PC-3 (cell line): ENCODE measurements at regions of chr10 and their contacts with region 1.

Region 1: DNA sequence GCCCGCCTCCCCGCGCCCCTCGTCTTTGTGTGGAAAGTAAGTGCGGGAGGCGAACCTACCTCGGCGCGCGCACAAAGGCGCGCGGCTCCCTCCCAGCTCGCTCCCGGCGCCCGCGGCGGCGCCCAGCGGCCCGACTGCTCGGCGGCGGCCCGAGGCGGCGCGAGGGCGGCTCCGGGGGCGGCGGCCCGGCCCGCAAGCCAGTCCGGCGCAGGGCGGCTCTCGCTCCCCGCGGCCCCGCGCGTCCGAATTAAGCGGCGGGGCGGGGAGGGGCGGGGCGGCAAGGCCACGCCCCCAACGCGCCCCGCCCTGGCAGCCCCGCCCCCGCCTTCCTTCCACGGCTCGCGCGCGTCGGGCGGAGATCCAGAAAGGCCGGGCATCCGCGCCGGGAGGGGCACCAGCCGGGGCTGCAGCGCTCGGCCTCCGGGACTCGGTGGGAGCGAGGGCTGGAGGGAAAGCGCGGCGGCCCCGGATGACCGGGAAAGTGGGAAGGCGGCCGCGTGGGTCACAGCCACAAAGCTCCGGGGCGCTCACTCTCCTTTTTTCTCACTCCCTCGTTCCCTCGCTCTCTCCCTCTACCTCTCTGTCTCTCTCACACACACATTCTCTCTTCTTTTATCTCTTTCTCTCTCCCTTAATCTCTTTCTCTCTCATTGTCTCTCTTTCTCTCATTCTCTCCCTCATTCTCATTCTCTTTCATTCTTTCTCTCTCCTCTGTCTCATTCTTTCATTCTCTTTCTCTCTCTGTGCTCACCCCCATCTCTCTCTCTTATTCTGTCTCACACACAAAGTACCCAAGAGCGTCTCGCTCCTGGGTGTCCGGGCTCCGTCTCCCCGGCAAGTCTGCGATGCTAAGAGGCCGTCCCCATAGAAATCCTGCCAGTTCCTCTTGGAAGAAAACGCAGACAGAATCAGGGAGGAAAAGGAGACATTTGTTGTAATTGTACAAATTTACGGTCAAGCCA is 170.2 kb downstream of the FAM107B start:
- DNase-seq: peak; percentile 69
- ATAC-seq: peak; percentile 59
- H3K4me3 ChIP-seq: peak overlapping the region; percentile 79
- H3K27ac ChIP-seq: peak overlapping the region; percentile 91
- H3K4me1 ChIP-seq: peaks cover 15% of the 10 kb centered on the region
- H3K27me3 ChIP-seq: no peaks in the 10 kb centered on the region
- CTCF ChIP-seq: no peak

Region 2: GRCh38 chr10:14414901-14415300 is 189.6 kb before region 1 on chr10:
- CTCF ChIA-PET with region 1: no interaction called
- POLR2A ChIA-PET with region 1: no interaction called
- intact Hi-C with region 1: no loop called
- DNase-seq: no peak
- ATAC-seq: no peak
- H3K4me3 ChIP-seq: no peak overlapping the region
- H3K27ac ChIP-seq: no peak overlapping the region
- H3K4me1 ChIP-seq: no peaks in the 10 kb centered on the region
- H3K27me3 ChIP-seq: 0 out of 2 replicates have a peak, but pooled peaks cover 4% of the 10 kb centered on the region
- CTCF ChIP-seq: no peak

Region 3: DNA sequence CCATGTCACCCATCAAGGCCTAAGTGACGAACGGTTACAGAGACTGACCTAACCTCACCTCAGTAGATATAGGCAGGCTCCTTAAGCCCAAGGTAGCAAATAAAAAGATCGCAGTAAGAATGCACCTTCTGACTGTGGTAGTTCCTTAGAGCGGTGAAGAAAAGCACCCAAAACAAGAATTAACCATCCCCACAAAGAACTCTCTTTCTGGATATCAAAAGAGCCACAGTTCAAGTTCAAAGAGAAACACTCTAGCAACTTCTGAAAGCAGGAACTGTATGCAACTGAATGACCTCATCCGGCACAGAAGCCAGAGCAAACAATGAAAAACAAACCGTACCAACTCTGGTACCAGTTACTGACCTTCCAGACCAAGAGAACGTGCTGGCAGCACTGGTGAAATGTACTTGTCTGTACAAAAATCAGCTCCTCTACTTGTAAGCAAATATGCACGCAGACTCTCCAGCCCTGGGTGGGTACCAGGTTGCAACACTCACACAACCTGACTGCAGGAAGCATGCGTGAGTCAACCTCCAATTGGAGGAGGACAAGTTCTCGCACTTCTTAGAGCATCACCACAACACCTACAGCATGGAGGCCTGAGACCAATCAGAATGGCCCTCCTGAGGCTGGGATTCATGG is 32.5 kb before region 1 on chr10:
- CTCF ChIA-PET with region 1: no interaction called
- POLR2A ChIA-PET with region 1: no interaction called
- intact Hi-C with region 1: loop called (anchors 2 kb)
- DNase-seq: peak; percentile 72
- ATAC-seq: peak; percentile 81
- H3K4me3 ChIP-seq: no peak overlapping the region
- H3K27ac ChIP-seq: peak overlapping the region; percentile 71
- H3K4me1 ChIP-seq: peaks cover 40% of the 10 kb centered on the region
- H3K27me3 ChIP-seq: no peaks in the 10 kb centered on the region
- CTCF ChIP-seq: no peak

Region 4: DNA sequence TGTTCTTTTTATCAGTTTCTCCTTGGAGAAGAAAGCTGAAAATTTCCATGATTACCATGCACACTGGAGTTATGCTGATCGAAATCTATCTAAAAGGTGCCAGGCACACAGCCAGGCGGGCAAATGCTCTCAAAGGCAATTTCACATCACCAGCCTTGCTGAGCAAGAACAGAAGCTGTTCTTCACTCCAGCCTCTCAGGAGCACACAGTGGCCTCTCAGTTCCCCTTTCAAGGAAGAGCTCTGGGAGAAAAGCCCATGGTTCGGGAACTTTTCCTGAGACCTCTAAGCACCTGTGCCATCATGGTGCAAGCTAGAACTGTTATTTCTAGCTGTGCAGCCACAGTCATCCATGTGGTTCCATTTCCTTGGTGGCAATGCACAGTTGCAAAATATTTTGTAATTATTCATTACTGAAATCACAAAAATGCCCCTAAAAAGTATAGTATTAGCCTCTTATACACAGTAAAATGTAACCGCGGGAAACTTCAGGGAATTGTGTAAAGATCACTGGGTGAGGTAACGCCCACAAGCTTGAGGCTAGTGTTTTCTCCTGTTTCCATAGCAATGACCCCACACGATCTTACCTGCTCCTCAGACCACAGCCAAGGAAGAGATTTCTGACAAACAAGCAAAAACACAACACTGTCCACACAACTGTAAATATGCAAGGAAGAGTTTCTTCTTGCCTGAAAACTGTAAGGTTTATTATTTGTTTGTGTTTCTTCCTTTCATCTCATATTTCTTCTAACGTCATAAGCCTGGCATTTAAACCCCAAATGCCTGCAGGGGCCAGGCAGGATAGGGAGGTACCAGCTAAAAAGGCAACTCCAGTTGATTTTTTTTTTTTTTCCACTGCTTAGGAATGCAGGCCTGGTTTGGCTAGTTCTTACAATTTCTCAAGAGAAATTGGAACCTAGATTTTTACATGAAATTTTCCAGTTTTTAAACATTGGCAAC is 49.1 kb after region 1 on chr10:
- CTCF ChIA-PET with region 1: no interaction called
- POLR2A ChIA-PET with region 1: no interaction called
- intact Hi-C with region 1: loop called (anchors 1 kb)
- DNase-seq: peak; percentile 79
- ATAC-seq: peak; percentile 65
- H3K4me3 ChIP-seq: peak overlapping the region; percentile 24; the same call in 1 of the 2 replicates
- H3K27ac ChIP-seq: peak overlapping the region; percentile 90
- H3K4me1 ChIP-seq: peaks cover 35% of the 10 kb centered on the region
- H3K27me3 ChIP-seq: no peaks in the 10 kb centered on the region
- CTCF ChIP-seq: no peak

Region 5: GRCh38 chr10:14670551-14671240 is 66.2 kb after region 1 on chr10:
- CTCF ChIA-PET with region 1: no interaction called
- POLR2A ChIA-PET with region 1: no interaction called
- intact Hi-C with region 1: loop called (anchors 1 kb)
- DNase-seq: peak; percentile 57
- ATAC-seq: peak; percentile 87
- H3K4me3 ChIP-seq: peak overlapping the region; percentile 65
- H3K27ac ChIP-seq: peak overlapping the region; percentile 99
- H3K4me1 ChIP-seq: peaks cover 27% of the 10 kb centered on the region
- H3K27me3 ChIP-seq: no peaks in the 10 kb centered on the region
- CTCF ChIP-seq: no peak

Region 6: GRCh38 chr10:14837757-14838581 is 233.5 kb after region 1 on chr10 and contains the starts of genes CDNF, HSPA14 and MSANTD7:
- CTCF ChIA-PET with region 1: no interaction called
- POLR2A ChIA-PET with region 1: interaction called, 4 read pairs
- intact Hi-C with region 1: loop called (anchors 5 kb)
- DNase-seq: peak; percentile 96
- ATAC-seq: peak; percentile 94
- H3K4me3 ChIP-seq: peak within 1 kb of the TSS; percentile 88
- H3K27ac ChIP-seq: peak within 1 kb of the TSS; percentile 35
- H3K4me1 ChIP-seq: peaks cover 6% of the 10 kb centered on the region; the same call in 1 of the 2 replicates
- H3K27me3 ChIP-seq: no peaks in the 10 kb centered on the region
- CTCF ChIP-seq: no peak
- total RNA-seq, gene CDNF: 1.2 TPM in 1 of 2 replicates, not detected in the other
- total RNA-seq, gene HSPA14: 17.5 and 18.1 TPM in 2 replicates
- total RNA-seq, gene MSANTD7: 8.2 and 10.7 TPM in 2 replicates